Caco-2 (cell line): ENCODE measurements at regions of chr16 and their contacts with region 1.

Region 1: DNA sequence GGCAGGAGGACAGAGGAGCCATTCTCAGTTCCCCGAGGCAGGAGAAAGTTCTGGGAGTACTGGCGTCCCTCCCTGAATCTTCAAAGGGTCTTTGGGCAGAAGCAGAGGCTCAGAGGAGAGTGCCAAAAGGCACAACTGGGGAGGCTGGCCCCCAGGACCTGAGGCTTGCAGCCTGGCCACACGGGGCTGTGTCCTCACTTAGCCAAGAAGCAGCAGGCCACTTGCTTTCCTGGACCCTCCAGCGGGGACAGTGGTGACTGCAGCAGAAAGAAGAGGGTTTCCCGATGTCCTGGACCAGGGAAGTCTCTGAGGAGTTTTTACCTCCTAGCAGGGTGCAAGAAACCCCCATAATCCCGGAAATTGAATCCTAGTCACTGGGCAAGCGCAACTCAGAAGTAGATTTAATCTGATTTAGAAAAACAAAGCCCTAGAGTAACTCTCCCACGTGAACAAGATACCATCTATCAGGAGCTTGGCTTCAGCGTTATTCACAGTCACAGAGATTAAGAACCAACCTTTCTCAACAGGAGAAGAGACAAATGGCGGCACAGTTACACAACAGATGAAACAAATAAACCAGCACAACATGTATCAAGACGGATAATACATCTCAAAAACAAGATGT is 25.5 kb upstream of the BCO1 start:
- DNase-seq: no peak
- H3K4me3 ChIP-seq: no peak overlapping the region
- H3K4me3 Mint-ChIP-seq: no peak overlapping the region
- H3K27ac Mint-ChIP-seq: no peak overlapping the region
- H3K4me1 ChIP-seq: peaks cover 6% of the 10 kb centered on the region; the same call in 1 of the 2 replicates
- H3K4me1 Mint-ChIP-seq: no peaks in the 10 kb centered on the region
- H3K27me3 ChIP-seq: no peaks in the 10 kb centered on the region
- H3K27me3 Mint-ChIP-seq: peaks cover 6% of the 10 kb centered on the region
- CTCF ChIP-seq: peak in 1 of 2 experiments; percentile 19

Region 2: DNA sequence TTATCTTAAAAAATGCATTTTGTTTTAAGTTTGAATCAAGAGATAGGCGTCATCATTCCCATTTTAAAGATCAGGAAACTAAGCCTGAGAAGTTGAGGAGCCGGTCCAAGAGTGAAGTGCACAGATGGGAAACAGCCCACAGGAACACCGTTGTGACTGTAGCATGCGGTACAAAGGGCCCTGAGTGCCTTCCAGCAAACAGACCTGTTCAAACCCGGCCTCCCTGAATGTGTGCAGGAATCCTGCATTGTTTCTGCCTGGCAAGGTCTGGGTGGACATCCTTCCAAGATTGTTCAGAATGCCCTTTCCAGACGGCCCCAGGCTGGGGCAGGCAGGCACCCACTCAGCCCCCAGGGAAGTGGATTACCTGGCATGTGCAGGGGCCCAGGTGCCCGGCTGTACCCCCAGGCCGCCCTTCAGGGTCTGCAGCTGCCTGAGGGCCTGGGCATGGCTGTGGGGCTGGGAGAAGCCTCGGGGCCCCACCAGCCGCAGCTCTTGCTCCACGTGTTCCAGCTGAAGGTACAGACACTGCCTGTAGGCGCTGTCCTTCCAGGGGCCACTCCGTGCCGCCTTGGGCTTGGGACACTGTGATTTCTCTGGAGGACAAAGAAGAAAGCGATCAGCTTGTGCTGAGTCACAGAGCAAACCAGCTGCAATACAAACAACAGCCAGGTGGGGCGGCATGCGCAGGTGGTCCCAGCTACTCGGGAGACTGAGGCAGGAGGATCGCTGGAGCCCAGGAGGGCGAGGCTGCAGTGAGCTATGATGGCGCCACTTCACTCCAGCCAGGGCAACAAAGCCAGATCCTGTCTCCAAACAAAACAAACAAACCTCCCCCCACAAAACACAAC is 71.8 kb before region 1 on chr16:
- CTCF ChIA-PET with region 1: no interaction called
- POLR2A ChIA-PET with region 1: no interaction called
- intact Hi-C with region 1: no loop called
- DNase-seq: peak; percentile 47 to 56
- H3K4me3 ChIP-seq: no peak overlapping the region
- H3K4me3 Mint-ChIP-seq: no peak overlapping the region
- H3K27ac Mint-ChIP-seq: no peak overlapping the region
- H3K4me1 ChIP-seq: peaks cover 39% of the 10 kb centered on the region
- H3K4me1 Mint-ChIP-seq: peaks cover 23% of the 10 kb centered on the region
- H3K27me3 ChIP-seq: no peaks in the 10 kb centered on the region
- H3K27me3 Mint-ChIP-seq: no peaks in the 10 kb centered on the region
- CTCF ChIP-seq: no peak

Region 3: GRCh38 chr16:81251871-81252270 is 38.9 kb after region 1 on chr16:
- CTCF ChIA-PET with region 1: no interaction called
- POLR2A ChIA-PET with region 1: no interaction called
- intact Hi-C with region 1: loop called (anchors 2 kb)
- DNase-seq: peak; percentile 49 to 66
- H3K4me3 ChIP-seq: no peak overlapping the region
- H3K4me3 Mint-ChIP-seq: no peak overlapping the region
- H3K27ac Mint-ChIP-seq: no peak overlapping the region
- H3K4me1 ChIP-seq: peaks cover 11% of the 10 kb centered on the region; the same call in 1 of the 2 replicates
- H3K4me1 Mint-ChIP-seq: peaks cover 9% of the 10 kb centered on the region
- H3K27me3 ChIP-seq: no peaks in the 10 kb centered on the region
- H3K27me3 Mint-ChIP-seq: no peaks in the 10 kb centered on the region
- CTCF ChIP-seq: no peak